Caco-2 (cell line): ENCODE measurements at regions of chr10 and their contacts with region 1.

Region 1: GRCh38 chr10:57849691-57850357 is 417.9 kb downstream of the IPMK start:
- DNase-seq: no peak
- H3K4me3 ChIP-seq: no peak overlapping the region
- H3K4me3 Mint-ChIP-seq: no peak overlapping the region
- H3K27ac Mint-ChIP-seq: no peak overlapping the region
- H3K4me1 ChIP-seq: no peaks in the 10 kb centered on the region
- H3K4me1 Mint-ChIP-seq: no peaks in the 10 kb centered on the region
- H3K27me3 ChIP-seq: no peaks in the 10 kb centered on the region
- H3K27me3 Mint-ChIP-seq: no peaks in the 10 kb centered on the region
- CTCF ChIP-seq: peak; percentile 54 to 62

Region 2: DNA sequence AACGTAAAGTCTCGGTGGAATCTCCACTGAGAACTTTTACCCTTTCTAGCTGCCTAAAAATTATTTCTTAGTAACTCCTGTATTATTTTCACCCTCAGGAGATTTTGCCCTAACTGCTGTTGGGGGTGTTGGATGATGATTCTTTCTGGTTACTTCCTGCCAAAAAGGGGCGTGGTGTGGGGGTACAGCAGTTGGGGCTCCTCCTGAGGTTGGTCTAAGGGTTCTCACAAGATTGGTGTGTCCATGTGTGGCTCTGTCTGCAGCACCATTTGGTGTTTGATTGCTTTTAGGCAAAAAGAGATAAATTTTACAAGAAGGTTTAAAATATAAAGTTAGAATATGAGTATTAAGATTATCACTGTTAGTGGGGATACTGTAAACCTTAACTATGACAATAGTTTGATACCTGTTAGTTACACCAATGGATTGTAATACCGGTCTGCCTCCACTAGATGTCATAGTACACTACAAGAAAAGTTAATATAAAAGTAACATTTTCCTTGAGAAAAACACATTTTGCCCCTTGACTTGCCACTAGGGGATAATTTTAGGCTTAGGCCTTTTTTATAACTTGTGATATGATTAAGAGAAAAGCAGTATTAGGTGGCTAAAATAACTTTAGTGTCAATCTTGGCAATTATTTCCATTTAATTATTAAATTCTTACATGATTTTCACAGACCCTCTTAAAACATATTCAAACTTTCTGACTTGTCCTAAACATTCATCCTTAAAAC is 510.8 kb before region 1 on chr10:
- CTCF ChIA-PET with region 1: no interaction called
- POLR2A ChIA-PET with region 1: no interaction called
- intact Hi-C with region 1: loop called (anchors 5 kb)
- DNase-seq: peak in 1 of 2 experiments; percentile 64
- H3K4me3 ChIP-seq: no peak overlapping the region
- H3K4me3 Mint-ChIP-seq: no peak overlapping the region
- H3K27ac Mint-ChIP-seq: no peak overlapping the region
- H3K4me1 ChIP-seq: no peaks in the 10 kb centered on the region
- H3K4me1 Mint-ChIP-seq: no peaks in the 10 kb centered on the region
- H3K27me3 ChIP-seq: no peaks in the 10 kb centered on the region
- H3K27me3 Mint-ChIP-seq: no peaks in the 10 kb centered on the region
- CTCF ChIP-seq: peak; percentile 83 to 95

Region 3: DNA sequence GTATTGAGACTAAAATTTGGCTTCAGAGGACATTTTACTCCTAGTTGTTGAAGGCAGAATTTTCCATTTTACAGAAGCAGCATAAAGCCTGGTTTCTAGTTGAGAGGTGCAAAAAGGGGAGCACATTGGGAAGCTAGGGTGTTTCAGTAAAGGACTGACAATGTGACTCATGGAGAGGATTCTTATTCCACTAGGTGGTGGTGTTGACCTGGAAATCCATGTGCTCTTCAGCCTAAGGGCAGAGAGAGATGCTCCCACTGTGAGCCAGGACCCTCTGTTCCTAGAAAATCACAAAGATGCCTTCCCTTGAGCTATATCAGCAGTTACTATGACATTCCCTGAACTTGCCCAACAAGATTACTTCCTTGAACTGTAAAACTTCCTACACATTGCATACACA is 269.9 kb before region 1 on chr10:
- CTCF ChIA-PET with region 1: no interaction called
- POLR2A ChIA-PET with region 1: no interaction called
- intact Hi-C with region 1: loop called (anchors 1 kb)
- DNase-seq: peak in 1 of 2 experiments; percentile 65
- H3K4me3 ChIP-seq: no peak overlapping the region
- H3K4me3 Mint-ChIP-seq: no peak overlapping the region
- H3K27ac Mint-ChIP-seq: no peak overlapping the region
- H3K4me1 ChIP-seq: no peaks in the 10 kb centered on the region
- H3K4me1 Mint-ChIP-seq: no peaks in the 10 kb centered on the region
- H3K27me3 ChIP-seq: no peaks in the 10 kb centered on the region
- H3K27me3 Mint-ChIP-seq: no peaks in the 10 kb centered on the region
- CTCF ChIP-seq: peak; percentile 48 to 61

Region 4: GRCh38 chr10:57716886-57717285 is 132.9 kb before region 1 on chr10:
- CTCF ChIA-PET with region 1: no interaction called
- POLR2A ChIA-PET with region 1: no interaction called
- intact Hi-C with region 1: loop called (anchors 1 kb)
- DNase-seq: peak in 1 of 2 experiments; percentile 49
- H3K4me3 ChIP-seq: no peak overlapping the region
- H3K4me3 Mint-ChIP-seq: no peak overlapping the region
- H3K27ac Mint-ChIP-seq: no peak overlapping the region
- H3K4me1 ChIP-seq: no peaks in the 10 kb centered on the region
- H3K4me1 Mint-ChIP-seq: no peaks in the 10 kb centered on the region
- H3K27me3 ChIP-seq: no peaks in the 10 kb centered on the region
- H3K27me3 Mint-ChIP-seq: peaks cover 7% of the 10 kb centered on the region
- CTCF ChIP-seq: peak; percentile 59 to 81

Region 5: GRCh38 chr10:57979466-57979865 is 129.6 kb after region 1 on chr10:
- CTCF ChIA-PET with region 1: no interaction called
- POLR2A ChIA-PET with region 1: no interaction called
- intact Hi-C with region 1: no loop called
- DNase-seq: peak in 1 of 2 experiments; percentile 40
- H3K4me3 ChIP-seq: no peak overlapping the region
- H3K4me3 Mint-ChIP-seq: no peak overlapping the region
- H3K27ac Mint-ChIP-seq: peak overlapping the region; percentile 37
- H3K4me1 ChIP-seq: peaks cover 39% of the 10 kb centered on the region
- H3K4me1 Mint-ChIP-seq: peaks cover 42% of the 10 kb centered on the region
- H3K27me3 ChIP-seq: no peaks in the 10 kb centered on the region
- H3K27me3 Mint-ChIP-seq: no peaks in the 10 kb centered on the region
- CTCF ChIP-seq: no peak

Region 6: DNA sequence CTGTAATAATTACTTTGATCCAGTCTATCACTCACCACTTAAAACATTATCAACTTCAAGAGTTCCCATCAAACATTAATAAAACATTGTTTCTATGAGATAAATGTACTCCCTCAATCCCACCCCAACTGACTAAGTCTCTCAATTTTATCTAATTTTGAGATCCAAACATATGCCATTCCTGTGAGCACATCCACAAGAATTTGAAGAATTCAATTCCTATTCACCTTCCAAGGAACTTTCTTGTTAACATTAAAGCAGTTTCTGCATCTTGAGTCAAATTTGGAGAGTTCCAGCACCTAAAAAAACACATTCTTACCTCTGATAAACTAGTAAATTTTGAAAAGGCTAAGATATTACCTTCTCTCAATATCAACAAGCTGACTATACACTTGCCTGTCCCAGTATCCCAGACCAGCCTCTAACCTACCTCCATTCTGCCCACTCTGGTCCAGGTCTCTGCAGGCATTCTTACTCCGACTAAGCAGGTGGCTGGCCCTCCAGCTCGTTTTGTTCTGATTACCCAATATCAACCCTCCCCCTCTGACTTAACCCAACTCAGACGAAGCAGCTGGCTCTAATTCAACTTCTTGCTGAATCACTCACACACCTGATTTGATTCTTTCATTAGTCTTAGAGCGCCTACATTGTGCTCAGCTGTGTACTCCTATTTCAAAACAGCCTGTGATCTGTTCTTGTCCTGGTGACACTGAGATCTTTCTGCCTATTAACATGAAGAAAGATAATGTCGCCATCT is 142.7 kb after region 1 on chr10:
- CTCF ChIA-PET with region 1: no interaction called
- POLR2A ChIA-PET with region 1: no interaction called
- intact Hi-C with region 1: loop called (anchors 2 kb)
- DNase-seq: no peak
- H3K4me3 ChIP-seq: no peak overlapping the region
- H3K4me3 Mint-ChIP-seq: no peak overlapping the region
- H3K27ac Mint-ChIP-seq: peak overlapping the region; percentile 1
- H3K4me1 ChIP-seq: peaks cover 15% of the 10 kb centered on the region; the same call in 1 of the 2 replicates
- H3K4me1 Mint-ChIP-seq: peaks cover 17% of the 10 kb centered on the region
- H3K27me3 ChIP-seq: no peaks in the 10 kb centered on the region
- H3K27me3 Mint-ChIP-seq: peaks cover 2% of the 10 kb centered on the region
- CTCF ChIP-seq: no peak